ENCODE measurements at regions of chr3 and their contacts with region 1.

Region 1: DNA sequence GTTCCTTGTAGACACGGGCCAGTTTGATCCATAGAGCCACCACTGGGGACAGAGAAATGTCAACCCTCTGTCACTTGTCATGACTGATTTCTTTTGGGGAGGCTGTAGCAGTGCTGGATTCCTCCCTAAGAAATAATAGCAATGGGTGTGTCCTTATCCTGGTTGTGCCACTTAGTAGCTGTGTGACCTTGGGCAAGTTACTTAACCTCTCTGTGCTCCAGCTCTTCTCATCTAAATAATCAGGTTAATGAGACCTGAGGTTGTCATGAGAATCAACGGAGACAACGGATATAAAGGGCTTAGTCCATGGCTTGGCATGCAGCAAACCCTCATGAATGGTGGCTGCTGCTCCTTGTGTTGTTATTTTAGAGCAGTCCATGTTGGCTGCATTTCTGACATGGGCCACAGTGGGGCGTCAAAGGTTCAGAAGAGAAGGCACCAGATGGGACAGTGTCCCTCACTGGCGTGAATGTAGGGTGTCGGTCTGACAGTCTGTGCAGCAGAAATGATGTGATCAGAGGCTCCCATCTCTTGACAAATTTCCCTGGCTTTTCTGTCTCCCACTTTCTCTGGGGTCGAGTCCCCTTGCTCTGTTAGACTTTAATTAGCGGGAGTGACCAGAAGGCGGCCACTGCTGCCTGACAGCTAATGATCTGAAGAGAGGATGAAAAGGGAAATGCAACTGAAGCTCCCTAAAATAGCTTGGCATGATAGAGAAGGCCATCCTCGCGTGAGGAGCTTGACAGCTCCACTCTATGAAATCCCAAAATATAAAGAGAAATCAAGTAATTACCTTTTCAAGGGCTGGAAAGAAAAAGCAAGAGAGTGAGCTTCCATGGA is 209.4 kb downstream of the CADPS start:
- DNase-seq: peak; percentile 82 to 89
- H3K4me3 ChIP-seq: no peak overlapping the region
- H3K27ac ChIP-seq: no peak overlapping the region
- H3K4me1 ChIP-seq: peaks cover 0 to 9% of the 10 kb centered on the region in 2 donors
- H3K27me3 ChIP-seq: no peaks in the 10 kb centered on the region
- CTCF ChIP-seq: peak; percentile 21 to 96 (median 80)
- POLR2A ChIP-seq: no peak

Region 2: DNA sequence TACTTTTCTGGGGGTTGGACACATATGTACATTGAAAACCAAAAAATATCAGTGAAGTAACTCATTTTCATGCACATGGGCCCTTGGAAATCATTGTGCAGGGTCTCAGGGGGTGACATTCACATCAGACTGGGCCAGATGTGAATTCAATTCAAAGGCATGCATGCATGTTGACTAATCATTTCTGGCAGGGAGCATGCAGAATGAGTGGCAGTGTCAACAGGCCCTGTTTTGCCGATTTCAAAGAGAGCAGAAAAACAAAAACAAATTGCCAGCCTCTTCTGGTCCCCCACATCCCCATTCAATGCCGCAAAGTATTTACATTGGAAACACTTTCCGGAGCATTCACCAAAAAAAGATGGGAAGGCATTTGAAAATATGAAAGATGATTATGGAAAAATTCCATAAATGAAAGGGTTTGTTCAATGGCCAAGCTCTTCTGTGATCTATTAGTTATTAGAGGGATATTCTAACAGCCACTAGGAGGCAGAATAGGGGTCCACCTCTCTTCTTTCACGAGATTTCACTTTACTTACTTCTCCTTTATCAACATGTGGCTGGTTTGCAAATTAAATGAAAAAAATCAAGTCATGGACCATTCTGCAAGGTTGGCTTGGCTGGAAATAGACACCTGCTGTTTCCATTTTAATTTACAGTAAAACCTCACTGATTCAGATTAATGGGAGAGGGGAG is 172.6 kb before region 1 on chr3:
- intact Hi-C with region 1: no loop called
- DNase-seq: no peak
- H3K4me3 ChIP-seq: no peak overlapping the region
- H3K27ac ChIP-seq: no peak overlapping the region
- H3K4me1 ChIP-seq: peaks cover 0 to 4% of the 10 kb centered on the region in 2 donors
- H3K27me3 ChIP-seq: no peaks in the 10 kb centered on the region
- CTCF ChIP-seq: peak in 1 of 6 experiments; percentile 9
- POLR2A ChIP-seq: no peak

Region 3: GRCh38 chr3:63193629-63194028 is 527.8 kb after region 1 on chr3:
- intact Hi-C with region 1: loop called (anchors 10 kb)
- DNase-seq: peak in 1 of 2 donors; percentile 3
- H3K4me3 ChIP-seq: no peak overlapping the region
- H3K27ac ChIP-seq: no peak overlapping the region
- H3K4me1 ChIP-seq: no peaks in the 10 kb centered on the region
- H3K27me3 ChIP-seq: no peaks in the 10 kb centered on the region
- CTCF ChIP-seq: peak in 5 of 6 experiments; percentile 21 to 80 (median 60)
- POLR2A ChIP-seq: no peak

Region 4: DNA sequence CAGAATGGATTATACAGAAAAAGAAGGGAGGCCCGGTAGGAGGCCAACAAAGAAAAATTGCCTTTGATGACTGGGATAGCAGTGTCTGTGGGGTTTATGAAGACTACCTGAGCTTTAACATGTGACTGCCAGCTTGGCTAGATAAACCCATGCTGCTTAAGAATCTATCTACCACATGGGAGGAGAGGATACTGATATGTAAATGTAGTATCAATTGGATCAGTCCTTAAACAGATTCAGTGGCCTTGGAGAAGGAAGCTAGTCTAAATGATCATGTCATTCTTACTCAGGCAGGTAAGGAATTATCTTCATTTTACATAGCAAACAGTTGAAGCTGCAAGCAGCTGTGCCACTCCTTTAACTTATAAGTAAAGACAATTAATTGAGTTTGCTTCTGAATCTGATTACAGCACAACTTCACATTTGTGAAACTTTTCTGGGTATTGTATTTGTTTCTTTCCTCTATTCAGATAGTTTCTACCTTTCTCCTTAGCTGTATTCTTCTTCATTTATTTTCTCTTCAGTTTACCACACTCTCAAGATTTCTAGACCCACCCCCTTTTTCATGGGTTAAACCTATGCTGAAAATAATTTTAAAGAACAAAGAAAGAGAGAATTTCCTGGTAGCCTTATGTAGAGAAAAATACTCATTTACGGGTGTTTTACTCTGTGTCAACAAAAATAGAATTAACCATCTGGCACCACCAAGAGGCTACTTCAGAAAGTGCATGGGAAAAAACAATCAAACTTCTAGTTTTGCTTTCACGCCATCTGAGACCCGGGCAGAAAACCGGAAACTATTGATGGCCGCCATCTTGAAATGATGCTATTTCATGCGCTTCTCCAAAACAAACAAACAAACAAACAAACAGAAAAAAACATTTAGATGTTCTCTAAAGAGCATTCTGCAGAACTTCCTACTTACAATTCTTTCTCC is 562.5 kb after region 1 on chr3:
- intact Hi-C with region 1: loop called (anchors 10 kb)
- DNase-seq: peak; percentile 7 to 15
- H3K4me3 ChIP-seq: no peak overlapping the region
- H3K27ac ChIP-seq: no peak overlapping the region
- H3K4me1 ChIP-seq: peaks cover 0 to 4% of the 10 kb centered on the region in 2 donors
- H3K27me3 ChIP-seq: no peaks in the 10 kb centered on the region
- CTCF ChIP-seq: peak in 4 of 6 experiments; percentile 36 to 67 (median 58)
- POLR2A ChIP-seq: no peak